IMR-90 (cell line): ENCODE measurements at regions of chr17 and their contacts with region 1.

Region 1: GRCh38 chr17:66340720-66341119 is 38.3 kb downstream of the PRKCA start:
- DNase-seq: no peak
- ATAC-seq: no peak
- H3K4me3 ChIP-seq: no peak overlapping the region
- H3K27ac ChIP-seq: no peak overlapping the region
- H3K4me1 ChIP-seq: peaks cover 18% of the 10 kb centered on the region
- H3K27me3 ChIP-seq: no peaks in the 10 kb centered on the region
- CTCF ChIP-seq: no peak
- POLR2A ChIP-seq: no peak
- RAD21 ChIP-seq: no peak

Region 2: GRCh38 chr17:65730711-65731169 is 610.0 kb before region 1 on chr17:
- CTCF ChIA-PET with region 1: no interaction called
- POLR2A ChIA-PET with region 1: no interaction called
- dilution Hi-C with region 1: no loop called
- in situ Hi-C with region 1: no loop called
- intact Hi-C with region 1: no loop called
- DNase-seq: no peak
- ATAC-seq: no peak
- H3K4me3 ChIP-seq: no peak overlapping the region
- H3K27ac ChIP-seq: no peak overlapping the region
- H3K4me1 ChIP-seq: no peaks in the 10 kb centered on the region
- H3K27me3 ChIP-seq: no peaks in the 10 kb centered on the region
- CTCF ChIP-seq: no peak
- POLR2A ChIP-seq: no peak
- RAD21 ChIP-seq: no peak

Region 3: DNA sequence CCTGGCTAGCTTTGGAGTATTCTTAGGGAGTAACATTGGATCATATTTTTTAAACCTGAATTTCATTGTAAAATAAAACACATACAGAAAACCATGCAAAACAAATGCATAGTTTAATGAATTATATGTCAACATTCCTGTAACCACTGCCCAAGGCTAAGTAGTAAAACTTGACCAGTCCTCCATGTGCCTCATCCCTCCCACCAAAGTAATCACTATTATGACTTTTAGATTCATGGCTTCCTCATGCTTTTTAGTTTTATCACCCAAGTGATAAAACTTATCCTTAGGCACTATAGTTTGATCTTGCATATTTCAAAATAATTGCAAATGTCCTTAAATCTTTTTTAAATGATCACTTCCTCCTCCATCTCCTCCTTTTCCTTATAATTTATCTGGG is 18.0 kb before region 1 on chr17:
- CTCF ChIA-PET with region 1: no interaction called
- POLR2A ChIA-PET with region 1: no interaction called
- dilution Hi-C with region 1: no loop called
- in situ Hi-C with region 1: no loop called
- intact Hi-C with region 1: loop called (anchors 1 kb)
- DNase-seq: no peak
- ATAC-seq: no peak
- H3K4me3 ChIP-seq: no peak overlapping the region
- H3K27ac ChIP-seq: no peak overlapping the region
- H3K4me1 ChIP-seq: no peaks in the 10 kb centered on the region
- H3K27me3 ChIP-seq: no peaks in the 10 kb centered on the region
- CTCF ChIP-seq: no peak
- POLR2A ChIP-seq: no peak
- RAD21 ChIP-seq: no peak